ENCODE measurements at regions of chr16 and their contacts with region 1.

Region 1: DNA sequence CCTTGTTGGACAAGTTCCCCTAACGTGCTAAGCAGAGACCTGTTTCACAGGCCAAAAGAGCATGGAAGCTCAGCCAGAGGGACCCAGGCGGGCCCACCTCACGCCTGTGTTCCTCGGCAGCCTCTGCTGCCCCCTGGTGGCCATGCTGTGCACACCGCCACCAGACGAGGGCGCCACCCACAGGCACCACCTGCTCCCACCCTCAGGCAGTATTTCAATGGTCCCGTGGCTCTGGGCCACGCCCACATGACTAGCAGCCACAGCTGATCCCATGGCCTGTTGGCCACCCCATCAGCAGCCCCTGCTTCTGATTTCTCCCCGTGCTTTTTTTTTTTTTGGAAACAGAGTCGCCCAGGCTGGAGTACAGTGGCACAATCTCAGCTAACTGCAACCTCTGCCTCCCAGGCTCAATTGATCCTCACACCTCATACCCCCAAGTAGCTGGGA is 18.9 kb downstream of the MPG start:
- DNase-seq: peak; percentile 94
- H3K4me3 Mint-ChIP-seq: no peak overlapping the region
- H3K27ac Mint-ChIP-seq: no peak overlapping the region
- H3K4me1 Mint-ChIP-seq: peaks cover 3% of the 10 kb centered on the region
- H3K27me3 Mint-ChIP-seq: no peaks in the 10 kb centered on the region

Region 2: DNA sequence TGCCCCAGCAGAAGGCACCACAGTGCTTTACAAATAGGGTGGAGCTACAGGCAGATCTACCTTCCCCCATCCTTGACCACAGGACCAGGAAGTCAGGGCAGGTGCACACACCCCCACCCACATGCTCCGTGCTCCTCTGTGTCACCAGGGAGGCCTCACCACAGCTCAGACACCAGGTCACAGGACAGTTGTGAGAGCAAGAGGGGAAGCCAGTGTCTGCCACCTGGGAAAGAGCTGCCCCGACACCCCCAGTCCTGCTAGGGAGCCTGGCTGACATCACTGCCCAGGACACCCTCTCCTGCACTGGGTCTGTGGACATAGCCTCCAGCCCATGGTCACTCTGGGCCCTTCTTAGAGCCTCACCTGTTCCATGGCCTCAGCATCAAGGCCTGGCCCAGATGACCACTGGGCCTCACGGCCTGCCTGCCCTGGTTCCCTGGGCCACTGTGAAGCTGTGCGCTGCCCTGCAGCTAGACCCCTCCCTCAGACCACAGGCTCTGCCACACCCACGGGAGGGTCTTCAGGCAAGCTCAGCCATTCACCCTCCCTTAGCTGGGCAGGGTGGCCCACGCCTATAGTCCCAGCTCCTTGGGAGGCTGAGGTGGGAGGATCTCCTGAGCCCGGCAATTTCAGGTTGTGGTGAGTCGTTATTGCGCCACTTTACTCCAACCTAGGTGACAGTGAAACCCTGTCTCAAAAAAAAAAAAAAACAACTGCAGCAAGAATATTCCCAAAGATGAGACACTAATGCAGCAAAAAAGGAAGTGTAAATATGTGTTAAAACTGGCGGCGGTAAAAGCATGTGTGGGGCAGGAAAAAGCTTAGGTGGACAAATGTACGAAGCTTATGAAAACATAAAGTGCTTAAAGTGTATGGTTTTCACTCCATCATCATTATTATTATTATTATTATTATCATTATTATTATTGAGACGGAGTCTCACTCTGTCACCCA is 57.7 kb before region 1 on chr16:
- CTCF ChIA-PET with region 1: interaction called, 17 read pairs
- POLR2A ChIA-PET with region 1: no interaction called
- intact Hi-C with region 1: no loop called
- DNase-seq: peak; percentile 68
- H3K4me3 Mint-ChIP-seq: no peak overlapping the region
- H3K27ac Mint-ChIP-seq: no peak overlapping the region
- H3K4me1 Mint-ChIP-seq: peaks cover 37% of the 10 kb centered on the region
- H3K27me3 Mint-ChIP-seq: no peaks in the 10 kb centered on the region

Region 3: DNA sequence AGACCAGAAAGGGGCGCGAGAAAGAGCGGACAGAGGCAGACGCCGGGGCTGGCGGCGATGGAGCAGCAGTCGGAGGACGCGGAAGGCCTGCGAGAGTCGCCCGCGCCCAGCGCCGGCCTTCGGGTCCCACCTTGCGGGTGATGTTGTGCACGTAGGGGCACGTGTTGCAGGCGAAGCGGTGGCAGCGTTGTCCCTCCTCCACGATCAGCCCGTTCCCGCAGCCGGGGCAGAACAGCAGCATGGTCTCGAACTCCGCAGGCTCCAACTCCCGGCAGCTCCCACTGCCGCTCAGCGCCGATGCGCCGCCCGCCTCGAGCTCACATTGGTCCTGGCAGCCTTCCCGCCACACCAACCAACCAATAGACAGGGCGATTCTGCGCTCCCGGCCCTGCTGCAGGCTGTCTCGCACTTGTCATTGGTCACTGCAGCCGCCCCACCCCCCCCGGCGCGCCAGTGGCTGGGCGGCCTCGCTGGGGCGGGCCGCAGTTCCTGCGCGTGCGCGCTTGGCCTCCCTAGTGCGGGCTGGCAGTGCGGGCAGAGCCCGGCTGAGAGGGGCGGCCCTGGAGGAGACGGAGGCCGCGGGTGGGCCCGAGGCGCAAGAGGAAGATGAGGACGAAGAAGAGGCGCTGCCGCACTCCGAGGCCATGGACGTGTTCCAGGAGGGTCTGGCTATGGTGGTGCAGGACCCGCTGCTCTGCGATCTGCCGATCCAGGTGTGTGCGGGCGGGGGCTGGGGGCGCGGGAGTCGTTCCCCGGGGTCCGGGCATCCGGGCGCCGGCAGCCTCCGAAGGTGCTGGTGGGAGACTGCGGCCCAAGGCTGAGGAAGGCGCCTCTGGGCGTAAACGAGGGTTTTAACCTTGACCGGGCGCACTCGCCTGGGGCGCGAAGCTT is 43.4 kb before region 1 on chr16 and contains the starts of genes POLR3K and SNRNP25:
- CTCF ChIA-PET with region 1: interaction called, 17 read pairs
- POLR2A ChIA-PET with region 1: interaction called, 3 read pairs
- intact Hi-C with region 1: no loop called
- DNase-seq: peak; percentile 99
- H3K4me3 Mint-ChIP-seq: peak within 1 kb of the TSS; percentile 87
- H3K27ac Mint-ChIP-seq: peak within 1 kb of the TSS; percentile 90
- H3K4me1 Mint-ChIP-seq: peaks cover 27% of the 10 kb centered on the region
- H3K27me3 Mint-ChIP-seq: no peaks in the 10 kb centered on the region
- total RNA-seq, gene POLR3K: 39.9 to 45.3 TPM
- total RNA-seq, gene SNRNP25: 48.5 to 51.1 TPM

Region 4: GRCh38 chr16:77807-78443 is 19.0 kb before region 1 on chr16 and contains the start of gene MPG:
- CTCF ChIA-PET with region 1: interaction called, 384 read pairs
- POLR2A ChIA-PET with region 1: interaction called, 3 read pairs
- intact Hi-C with region 1: no loop called
- DNase-seq: peak; percentile 88
- H3K4me3 Mint-ChIP-seq: peak within 1 kb of the TSS; percentile 85
- H3K27ac Mint-ChIP-seq: peak within 1 kb of the TSS; percentile 85
- H3K4me1 Mint-ChIP-seq: peaks cover 33% of the 10 kb centered on the region
- H3K27me3 Mint-ChIP-seq: peaks cover 14% of the 10 kb centered on the region
- total RNA-seq, gene MPG: 53.1 to 58.7 TPM

Region 5: DNA sequence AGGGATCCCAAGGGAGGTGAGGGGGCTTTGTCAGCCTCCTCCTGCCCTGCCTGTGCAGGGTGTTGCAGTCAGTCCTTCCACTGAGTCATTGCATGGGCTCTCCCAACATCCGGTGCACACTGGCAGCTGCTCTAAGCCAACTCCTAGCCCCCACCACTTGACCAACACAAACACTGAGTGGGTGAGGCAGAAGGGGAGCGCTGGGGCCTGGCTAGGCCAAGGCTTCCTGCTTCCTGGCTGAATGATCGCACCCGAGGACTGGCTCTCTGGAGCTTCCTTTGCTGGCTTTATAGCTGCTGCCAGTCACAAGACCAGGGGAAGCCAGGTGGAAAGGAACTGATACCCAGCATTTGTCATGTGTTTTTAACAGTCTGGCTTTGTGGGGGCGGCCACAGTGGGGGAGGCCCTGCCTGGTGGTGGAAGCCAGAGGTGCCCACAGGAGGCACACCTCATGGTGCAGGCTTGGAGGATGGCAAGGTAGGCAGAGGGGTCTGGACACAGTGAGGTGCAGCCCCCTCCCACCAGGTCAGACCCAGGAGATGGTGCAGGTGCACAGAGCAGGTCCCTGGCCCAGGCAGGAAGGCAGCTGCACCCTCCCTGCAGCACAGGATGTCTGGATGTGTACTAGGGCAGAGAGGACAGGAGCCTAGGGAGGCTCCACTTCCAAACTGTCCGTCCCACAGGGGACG is 12.1 kb before region 1 on chr16:
- CTCF ChIA-PET with region 1: interaction called, 47 read pairs
- POLR2A ChIA-PET with region 1: no interaction called
- intact Hi-C with region 1: no loop called
- DNase-seq: peak; percentile 88
- H3K4me3 Mint-ChIP-seq: no peak overlapping the region
- H3K27ac Mint-ChIP-seq: peak overlapping the region; percentile 88
- H3K4me1 Mint-ChIP-seq: peaks cover 25% of the 10 kb centered on the region
- H3K27me3 Mint-ChIP-seq: no peaks in the 10 kb centered on the region

Region 6: GRCh38 chr16:154223-155030 is 57.5 kb after region 1 on chr16:
- CTCF ChIA-PET with region 1: no interaction called
- POLR2A ChIA-PET with region 1: no interaction called
- intact Hi-C with region 1: no loop called
- DNase-seq: peak; percentile 28
- H3K4me3 Mint-ChIP-seq: peak overlapping the region; percentile 45
- H3K27ac Mint-ChIP-seq: no peak overlapping the region
- H3K4me1 Mint-ChIP-seq: peaks cover 5% of the 10 kb centered on the region
- H3K27me3 Mint-ChIP-seq: peaks cover 21% of the 10 kb centered on the region

Region 7: DNA sequence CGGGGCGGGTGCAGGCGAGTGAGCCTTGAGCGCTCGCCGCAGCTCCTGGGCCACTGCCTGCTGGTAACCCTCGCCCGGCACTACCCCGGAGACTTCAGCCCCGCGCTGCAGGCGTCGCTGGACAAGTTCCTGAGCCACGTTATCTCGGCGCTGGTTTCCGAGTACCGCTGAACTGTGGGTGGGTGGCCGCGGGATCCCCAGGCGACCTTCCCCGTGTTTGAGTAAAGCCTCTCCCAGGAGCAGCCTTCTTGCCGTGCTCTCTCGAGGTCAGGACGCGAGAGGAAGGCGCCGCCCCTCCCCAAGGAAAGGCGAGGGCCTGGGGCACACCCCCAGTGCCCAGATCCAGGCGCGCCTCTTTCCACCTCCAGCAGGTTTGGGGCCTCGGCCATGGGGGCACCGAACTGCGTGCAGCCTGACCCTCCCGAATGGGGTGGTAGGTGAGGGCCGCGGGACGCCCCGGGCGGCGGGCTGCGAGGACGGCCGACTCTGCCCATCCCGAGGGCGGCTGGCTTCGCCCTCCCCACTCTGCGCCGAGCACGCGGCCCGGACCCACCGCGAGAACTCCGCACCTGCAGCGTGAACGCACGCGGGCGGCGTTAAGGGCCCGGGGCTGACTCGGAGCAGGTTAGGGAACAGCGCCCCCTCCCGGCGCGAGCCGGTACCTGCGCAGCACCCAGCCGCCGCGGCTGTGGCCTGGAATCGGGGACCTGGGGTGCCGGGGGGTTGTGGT is 84.1 kb after region 1 on chr16:
- CTCF ChIA-PET with region 1: interaction called, 11 read pairs
- POLR2A ChIA-PET with region 1: no interaction called
- intact Hi-C with region 1: no loop called
- DNase-seq: peak; percentile 89
- H3K4me3 Mint-ChIP-seq: peak overlapping the region; percentile 20
- H3K27ac Mint-ChIP-seq: no peak overlapping the region
- H3K4me1 Mint-ChIP-seq: no peaks in the 10 kb centered on the region
- H3K27me3 Mint-ChIP-seq: peaks cover 22% of the 10 kb centered on the region

Region 8: DNA sequence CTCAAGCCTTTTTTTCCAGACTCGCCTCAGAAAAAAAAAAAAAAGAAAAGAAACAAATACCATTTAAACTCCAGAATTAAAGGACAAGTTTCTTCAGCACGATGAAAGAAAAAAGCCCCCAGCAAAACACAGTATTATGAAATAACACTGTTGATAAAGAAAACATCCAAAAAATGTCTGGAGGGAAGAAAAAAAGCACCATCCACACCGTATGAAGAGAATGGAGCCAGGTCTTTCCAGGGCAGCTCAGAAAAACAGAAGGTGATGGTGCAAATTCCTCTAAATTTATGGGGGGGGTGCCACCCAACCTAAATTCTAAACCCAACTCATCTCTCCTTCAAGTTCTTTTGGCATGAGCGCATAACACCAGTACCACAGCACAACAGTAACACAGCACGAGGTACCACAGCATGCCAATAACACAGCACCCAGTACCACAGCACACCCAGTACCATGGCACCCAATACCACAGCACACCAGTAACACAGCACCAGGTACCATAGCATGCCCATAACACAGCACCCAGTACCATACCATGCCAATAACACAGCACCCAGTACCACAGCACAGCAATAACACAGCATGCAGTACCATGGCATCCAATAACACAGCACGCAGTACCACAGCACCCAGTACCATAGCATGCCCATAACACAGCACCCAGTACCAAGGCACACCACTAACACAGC is 236.6 kb after region 1 on chr16:
- CTCF ChIA-PET with region 1: no interaction called
- POLR2A ChIA-PET with region 1: no interaction called
- intact Hi-C with region 1: no loop called
- DNase-seq: no peak
- H3K4me3 Mint-ChIP-seq: no peak overlapping the region
- H3K27ac Mint-ChIP-seq: no peak overlapping the region
- H3K4me1 Mint-ChIP-seq: peaks cover 41% of the 10 kb centered on the region
- H3K27me3 Mint-ChIP-seq: no peaks in the 10 kb centered on the region